ENCODE measurements at regions of chr6 and their contacts with region 1.

Region 1: DNA sequence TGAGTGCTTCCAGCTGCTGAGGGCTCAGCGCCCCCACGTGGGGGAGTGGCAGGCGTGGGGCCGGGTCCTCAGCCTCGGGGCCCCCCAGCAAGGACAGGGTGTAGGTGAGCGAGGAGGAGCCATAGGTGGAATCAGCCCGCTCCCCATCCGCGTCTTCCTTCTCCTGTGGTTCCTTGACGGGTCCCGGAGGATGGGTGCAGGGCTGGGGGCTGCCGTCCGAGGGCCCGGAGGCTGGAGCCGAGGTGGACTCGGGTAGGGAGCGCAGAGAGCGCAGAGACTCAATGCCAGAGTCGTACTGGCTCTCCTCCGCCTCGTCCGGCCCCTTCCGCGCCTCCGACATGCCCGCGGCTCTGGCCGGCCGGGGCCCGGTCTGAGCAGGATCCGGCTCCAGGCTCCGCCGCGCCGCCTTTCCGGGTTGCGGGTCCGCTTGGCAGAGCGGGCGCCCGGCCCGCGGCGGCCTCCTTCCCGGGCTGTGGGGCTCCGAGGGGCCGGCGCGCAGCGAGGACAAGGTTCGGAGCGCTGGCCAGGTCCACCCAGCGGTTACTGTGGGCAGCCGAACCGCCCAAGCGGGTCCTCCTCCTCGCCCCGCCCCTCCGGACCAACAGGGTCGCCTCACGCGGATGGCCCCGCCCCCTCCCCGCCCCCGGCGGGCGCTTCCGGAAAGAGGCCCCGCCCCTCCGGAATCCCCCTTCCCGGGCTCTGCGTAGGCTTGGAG is at the start of gene NFKBIE:
- DNase-seq: peak; percentile 99
- ATAC-seq: peak; percentile 50
- H3K4me3 Mint-ChIP-seq: peak within 1 kb of the TSS; percentile 100
- H3K27ac Mint-ChIP-seq: peak within 1 kb of the TSS; percentile 99
- H3K4me1 Mint-ChIP-seq: peaks cover 77% of the 10 kb centered on the region
- H3K27me3 Mint-ChIP-seq: peaks cover 4% of the 10 kb centered on the region
- CTCF ChIP-seq: no peak
- total RNA-seq, gene NFKBIE: 94.7 and 99.2 TPM in 2 replicates

Region 2: DNA sequence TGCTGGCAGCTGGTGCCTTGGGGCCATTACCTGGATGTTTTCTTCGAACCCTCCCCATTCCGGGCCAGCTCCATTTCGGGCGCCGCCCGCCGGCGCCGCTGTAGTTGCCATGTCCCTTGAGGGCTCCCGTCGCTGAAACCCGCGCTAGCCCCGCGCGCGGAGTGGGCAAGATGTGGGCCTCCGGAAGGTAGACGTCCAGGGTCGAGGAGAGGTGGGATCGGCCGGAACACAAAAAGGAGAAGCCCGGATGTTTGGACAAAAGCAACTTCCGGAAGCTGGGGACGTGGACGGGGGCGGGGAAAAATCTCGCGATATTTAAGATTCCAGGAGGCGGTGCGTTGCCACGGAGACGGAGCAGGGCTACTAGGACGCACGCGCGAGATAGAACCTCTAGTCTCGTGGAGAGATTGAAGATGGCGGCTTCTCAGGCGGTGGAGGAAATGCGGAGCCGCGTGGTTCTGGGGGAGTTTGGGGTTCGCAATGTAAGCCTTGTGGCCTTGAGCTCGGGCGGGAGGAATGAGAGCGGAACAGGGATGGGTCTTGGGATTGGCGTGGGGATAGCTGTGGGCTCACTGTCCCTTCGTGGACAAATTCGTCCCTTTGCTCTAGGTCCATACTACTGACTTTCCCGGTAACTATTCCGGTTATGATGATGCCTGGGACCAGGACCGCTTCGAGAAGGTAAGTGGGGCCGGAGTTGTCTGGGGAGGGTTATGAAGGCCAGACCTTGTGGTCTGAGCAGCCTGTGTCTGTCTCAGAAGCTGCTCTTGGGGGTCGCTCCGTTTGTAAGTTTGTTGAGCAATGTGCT is 748.3 kb before region 1 on chr6 and contains the starts of genes POLR1C and YIPF3:
- CTCF ChIA-PET with region 1: no interaction called
- POLR2A ChIA-PET with region 1: no interaction called
- intact Hi-C with region 1: loop called (anchors 10 kb)
- DNase-seq: peak; percentile 87
- ATAC-seq: peak; percentile 94
- H3K4me3 Mint-ChIP-seq: no peak within 1 kb of the TSS
- H3K27ac Mint-ChIP-seq: peak within 1 kb of the TSS; percentile 54
- H3K4me1 Mint-ChIP-seq: peaks cover 29% of the 10 kb centered on the region
- H3K27me3 Mint-ChIP-seq: no peaks in the 10 kb centered on the region
- CTCF ChIP-seq: no peak
- total RNA-seq, gene POLR1C: 67.7 and 75.6 TPM in 2 replicates
- total RNA-seq, gene YIPF3: 51.7 and 59.1 TPM in 2 replicates

Region 3: GRCh38 chr6:43790025-43790523 is 475.1 kb before region 1 on chr6:
- CTCF ChIA-PET with region 1: no interaction called
- POLR2A ChIA-PET with region 1: no interaction called
- intact Hi-C with region 1: no loop called
- DNase-seq: no peak
- ATAC-seq: no peak
- H3K4me3 Mint-ChIP-seq: no peak overlapping the region
- H3K27ac Mint-ChIP-seq: no peak overlapping the region
- H3K4me1 Mint-ChIP-seq: no peaks in the 10 kb centered on the region
- H3K27me3 Mint-ChIP-seq: no peaks in the 10 kb centered on the region
- CTCF ChIP-seq: no peak

Region 4: DNA sequence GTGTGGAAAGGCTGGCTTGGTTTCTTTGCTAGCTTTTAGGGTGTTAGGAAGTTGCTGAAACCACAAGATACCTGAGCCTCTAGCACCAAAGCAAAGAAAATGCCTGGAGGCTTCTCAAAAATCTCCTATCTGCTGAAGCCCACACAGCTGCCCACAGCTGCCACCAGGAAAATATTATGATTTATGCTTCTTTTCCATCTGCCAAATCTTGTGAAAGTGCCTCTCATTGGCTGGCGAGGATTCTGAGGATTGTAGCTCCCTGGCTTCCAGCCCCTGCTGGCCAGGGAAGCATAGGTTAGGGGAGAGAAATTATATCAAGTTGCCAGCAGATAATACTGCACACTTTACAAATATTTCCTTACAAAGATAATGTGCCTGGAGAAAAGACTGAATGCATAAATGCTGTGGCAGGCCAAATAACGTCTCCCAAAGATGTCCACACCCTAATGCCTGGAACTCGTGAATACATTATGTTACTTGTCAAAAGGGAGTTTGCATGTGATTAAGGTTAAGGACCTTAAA is 236.3 kb before region 1 on chr6:
- CTCF ChIA-PET with region 1: no interaction called
- POLR2A ChIA-PET with region 1: no interaction called
- intact Hi-C with region 1: no loop called
- DNase-seq: no peak
- ATAC-seq: no peak
- H3K4me3 Mint-ChIP-seq: no peak overlapping the region
- H3K27ac Mint-ChIP-seq: no peak overlapping the region
- H3K4me1 Mint-ChIP-seq: no peaks in the 10 kb centered on the region
- H3K27me3 Mint-ChIP-seq: peaks cover 30% of the 10 kb centered on the region
- CTCF ChIP-seq: no peak

Region 5: DNA sequence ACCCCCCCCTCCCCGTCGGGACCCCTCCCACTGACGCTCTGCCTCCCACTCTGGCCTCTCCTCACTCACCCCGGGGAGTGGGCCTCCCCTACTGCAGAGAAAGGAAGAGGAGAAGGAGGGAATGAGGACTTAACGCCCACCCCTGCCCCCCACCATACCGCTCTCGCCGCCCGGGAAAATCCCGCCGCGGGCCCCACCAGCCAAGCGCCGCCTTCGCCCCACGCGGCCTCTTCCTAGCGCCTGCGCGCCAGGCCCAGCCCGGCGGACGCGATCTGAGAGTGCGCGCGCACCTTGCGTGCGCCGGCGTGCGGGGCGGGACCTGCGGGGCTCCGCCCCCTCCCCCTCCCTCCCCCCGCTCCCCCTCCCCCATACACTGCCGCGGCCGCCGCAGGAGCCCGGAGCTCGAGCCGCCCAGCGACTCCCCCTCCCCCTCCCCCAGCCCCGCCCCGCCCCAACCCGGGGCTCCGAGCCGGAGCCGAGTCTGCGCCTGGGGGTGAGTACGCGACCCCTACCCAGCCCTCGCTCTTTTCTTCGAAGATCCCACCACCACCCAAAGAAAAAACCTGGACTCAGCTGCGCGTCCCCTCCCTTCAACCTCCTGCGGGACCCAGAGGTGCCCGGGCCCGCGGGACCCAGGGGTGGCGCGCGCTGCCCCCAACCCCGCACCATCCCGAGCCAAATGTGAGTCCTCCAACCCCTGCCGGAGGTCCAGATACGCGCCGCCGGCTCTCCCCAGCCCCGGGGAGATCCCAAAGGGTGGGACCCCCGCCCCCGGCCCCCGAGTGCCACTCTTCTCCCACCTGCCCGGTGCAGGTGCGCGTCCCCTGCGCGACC is 137.8 kb before region 1 on chr6 and contains the starts of genes MRPL14 and TMEM63B:
- CTCF ChIA-PET with region 1: no interaction called
- POLR2A ChIA-PET with region 1: no interaction called
- intact Hi-C with region 1: loop called (anchors 2 kb)
- DNase-seq: peak; percentile 89
- ATAC-seq: peak; percentile 87
- H3K4me3 Mint-ChIP-seq: peak within 1 kb of the TSS; percentile 93
- H3K27ac Mint-ChIP-seq: peak within 1 kb of the TSS; percentile 95
- H3K4me1 Mint-ChIP-seq: peaks cover 50% of the 10 kb centered on the region
- H3K27me3 Mint-ChIP-seq: no peaks in the 10 kb centered on the region
- CTCF ChIP-seq: no peak
- total RNA-seq, gene MRPL14: 40.5 and 45.5 TPM in 2 replicates
- total RNA-seq, gene TMEM63B: 12.3 and 13.9 TPM in 2 replicates

Region 6: DNA sequence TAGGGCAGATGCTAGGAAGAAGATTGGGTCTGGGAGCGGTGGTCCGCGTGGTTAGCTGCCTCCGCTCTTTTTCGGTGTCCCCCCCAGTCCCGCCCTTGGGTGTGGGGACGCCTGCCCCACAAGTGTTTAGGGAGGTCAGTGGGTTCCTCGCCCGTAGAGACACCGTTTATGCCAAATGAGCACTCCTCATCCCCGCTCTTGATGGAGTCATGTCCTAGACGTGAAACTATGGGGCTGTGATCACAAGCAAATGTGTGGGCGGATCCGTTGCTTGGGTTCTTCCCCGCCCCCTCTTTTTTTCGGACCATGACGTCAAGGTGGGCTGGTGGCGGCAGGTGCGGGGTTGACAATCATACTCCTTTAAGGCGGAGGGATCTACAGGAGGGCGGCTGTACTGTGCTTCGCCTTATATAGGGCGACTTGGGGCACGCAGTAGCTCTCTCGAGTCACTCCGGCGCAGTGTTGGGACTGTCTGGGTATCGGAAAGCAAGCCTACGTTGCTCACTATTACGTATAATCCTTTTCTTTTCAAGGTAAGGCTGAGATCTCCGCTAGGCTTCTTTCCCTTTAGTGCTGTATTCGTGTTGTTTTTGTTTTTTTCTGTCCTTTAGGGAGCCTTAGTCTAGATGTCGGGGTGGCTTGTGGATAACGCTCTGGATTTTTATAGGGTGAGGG is 18.4 kb before region 1 on chr6 and contains the start of gene HSP90AB1:
- CTCF ChIA-PET with region 1: interaction called, 10 read pairs
- POLR2A ChIA-PET with region 1: interaction called, 549 read pairs
- intact Hi-C with region 1: loop called (anchors 1 kb)
- DNase-seq: peak; percentile 88
- ATAC-seq: peak; percentile 75
- H3K4me3 Mint-ChIP-seq: peak within 1 kb of the TSS; percentile 99
- H3K27ac Mint-ChIP-seq: peak within 1 kb of the TSS; percentile 99
- H3K4me1 Mint-ChIP-seq: peaks cover 56% of the 10 kb centered on the region
- H3K27me3 Mint-ChIP-seq: no peaks in the 10 kb centered on the region
- CTCF ChIP-seq: no peak
- total RNA-seq, gene HSP90AB1: 1,222 and 1,311 TPM in 2 replicates

Region 7: GRCh38 chr6:44312901-44313788 is 48.0 kb after region 1 on chr6 and contains the start of gene AARS2:
- CTCF ChIA-PET with region 1: interaction called, 6 read pairs
- POLR2A ChIA-PET with region 1: no interaction called
- intact Hi-C with region 1: loop called (anchors 2 kb)
- DNase-seq: peak; percentile 94
- ATAC-seq: peak; percentile 96
- H3K4me3 Mint-ChIP-seq: peak within 1 kb of the TSS; percentile 96
- H3K27ac Mint-ChIP-seq: peak within 1 kb of the TSS; percentile 91
- H3K4me1 Mint-ChIP-seq: peaks cover 14% of the 10 kb centered on the region
- H3K27me3 Mint-ChIP-seq: peaks cover 6% of the 10 kb centered on the region
- CTCF ChIP-seq: peak; percentile 85
- total RNA-seq, gene AARS2: 19.1 and 22.4 TPM in 2 replicates

Region 8: DNA sequence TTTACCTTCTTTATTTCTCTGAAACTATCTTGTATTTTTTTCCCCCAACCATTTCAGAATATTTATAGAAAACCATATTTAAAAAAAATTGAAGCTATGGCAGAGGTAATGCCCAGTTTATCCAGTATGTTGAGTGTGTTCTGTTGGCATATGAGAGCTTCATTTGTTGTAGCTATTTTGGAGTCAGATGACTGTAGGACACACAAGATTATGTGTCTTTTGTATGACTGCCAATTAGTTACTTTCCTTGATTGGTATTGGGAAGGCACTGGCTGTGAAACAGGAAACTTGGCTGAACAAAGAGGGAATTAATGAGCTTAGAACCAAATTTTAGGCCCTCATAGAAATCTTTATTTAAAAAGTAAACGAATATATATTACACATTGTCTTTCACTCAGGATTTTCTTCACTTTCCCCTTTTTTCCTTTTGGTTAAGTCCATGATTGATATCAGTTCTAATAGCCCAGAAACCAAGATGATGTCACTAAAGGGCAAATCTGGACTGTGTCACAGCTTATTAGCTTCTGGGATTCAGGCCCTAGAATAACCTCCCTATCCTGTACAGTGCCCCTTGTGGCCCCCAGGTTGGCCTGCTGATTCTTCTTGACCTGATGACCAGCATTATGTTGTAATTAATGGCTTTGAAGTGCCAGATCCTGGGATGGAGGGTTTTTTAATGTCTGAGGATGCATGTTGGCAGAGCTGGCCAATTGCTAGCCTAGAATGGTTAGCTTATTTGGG is 132.4 kb after region 1 on chr6:
- CTCF ChIA-PET with region 1: no interaction called
- POLR2A ChIA-PET with region 1: no interaction called
- intact Hi-C with region 1: no loop called
- DNase-seq: no peak
- ATAC-seq: no peak
- H3K4me3 Mint-ChIP-seq: no peak overlapping the region
- H3K27ac Mint-ChIP-seq: no peak overlapping the region
- H3K4me1 Mint-ChIP-seq: no peaks in the 10 kb centered on the region
- H3K27me3 Mint-ChIP-seq: no peaks in the 10 kb centered on the region
- CTCF ChIP-seq: no peak

Region 9: GRCh38 chr6:44456070-44456965 is 191.2 kb after region 1 on chr6:
- CTCF ChIA-PET with region 1: no interaction called
- POLR2A ChIA-PET with region 1: no interaction called
- intact Hi-C with region 1: loop called (anchors 2 kb)
- DNase-seq: no peak
- ATAC-seq: peak; percentile 77
- H3K4me3 Mint-ChIP-seq: no peak overlapping the region
- H3K27ac Mint-ChIP-seq: no peak overlapping the region
- H3K4me1 Mint-ChIP-seq: no peaks in the 10 kb centered on the region
- H3K27me3 Mint-ChIP-seq: peaks cover 3% of the 10 kb centered on the region
- CTCF ChIP-seq: peak; percentile 93